ENCODE measurements at regions of chr18 and their contacts with region 1.

Region 1: GRCh38 chr18:35972197-35973052 is at the start of gene RMP24:
- DNase-seq: peak; percentile 90
- H3K4me3 Mint-ChIP-seq: peak within 1 kb of the TSS; percentile 96
- H3K27ac Mint-ChIP-seq: peak within 1 kb of the TSS; percentile 94
- H3K4me1 Mint-ChIP-seq: peaks cover 39% of the 10 kb centered on the region
- H3K27me3 Mint-ChIP-seq: no peaks in the 10 kb centered on the region

Region 2: GRCh38 chr18:34787931-34788532 is 1184.4 kb before region 1 on chr18:
- intact Hi-C with region 1: no loop called
- DNase-seq: no peak
- H3K4me3 Mint-ChIP-seq: no peak overlapping the region
- H3K27ac Mint-ChIP-seq: no peak overlapping the region
- H3K4me1 Mint-ChIP-seq: peaks cover 3% of the 10 kb centered on the region
- H3K27me3 Mint-ChIP-seq: peaks cover 9% of the 10 kb centered on the region

Region 3: GRCh38 chr18:35240664-35241447 is 731.6 kb before region 1 on chr18 and contains the start of gene ZNF397:
- intact Hi-C with region 1: loop called (anchors 1 kb)
- DNase-seq: peak; percentile 94
- H3K4me3 Mint-ChIP-seq: peak within 1 kb of the TSS; percentile 94
- H3K27ac Mint-ChIP-seq: peak within 1 kb of the TSS; percentile 98
- H3K4me1 Mint-ChIP-seq: peaks cover 11% of the 10 kb centered on the region
- H3K27me3 Mint-ChIP-seq: no peaks in the 10 kb centered on the region
- total RNA-seq, gene ZNF397: 14.6 and 18.4 TPM in 2 replicates

Region 4: DNA sequence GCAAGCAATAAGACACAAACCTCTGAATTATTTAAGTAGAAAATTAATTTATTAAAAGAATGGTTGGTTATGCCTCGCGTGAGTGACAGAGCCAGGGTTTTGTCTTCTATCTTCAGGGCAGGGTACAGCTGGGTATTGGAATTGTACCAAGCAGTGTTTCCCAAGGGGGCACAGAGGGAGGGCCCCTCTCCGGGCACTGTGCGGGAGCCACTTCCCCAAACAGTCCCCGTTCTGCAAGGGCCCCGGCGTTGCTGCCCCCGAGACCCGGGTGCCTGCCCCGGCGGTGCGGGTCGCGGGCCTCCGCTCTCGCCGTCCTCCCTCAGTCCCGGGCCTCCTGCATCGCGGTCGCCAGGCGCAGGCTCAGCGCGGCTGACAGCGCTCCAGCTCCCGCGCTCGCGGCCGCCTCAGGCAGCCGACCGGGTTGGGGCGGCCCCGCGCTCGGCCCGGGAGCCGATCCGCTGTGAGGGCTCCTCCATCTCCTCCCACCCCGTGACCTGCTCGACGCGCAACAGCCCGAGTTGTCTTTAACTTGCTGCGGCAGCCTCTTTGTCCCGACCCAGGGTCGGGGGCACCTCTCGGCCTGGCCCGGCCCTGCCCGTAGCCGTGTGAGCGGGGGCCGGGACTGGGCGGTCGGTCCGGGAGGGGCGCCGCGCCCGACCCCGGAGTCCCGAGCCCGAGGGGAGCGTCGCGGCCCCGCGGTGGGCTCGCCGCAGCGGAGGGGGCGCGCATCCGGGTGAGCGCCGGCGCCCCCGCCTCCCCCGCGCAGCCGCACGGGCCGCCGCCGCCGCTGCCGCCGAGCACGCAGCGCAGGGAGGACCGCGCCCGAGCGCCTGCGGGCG is 391.5 kb before region 1 on chr18:
- intact Hi-C with region 1: loop called (anchors 5 kb)
- DNase-seq: peak; percentile 43
- H3K4me3 Mint-ChIP-seq: peak overlapping the region; percentile 68
- H3K27ac Mint-ChIP-seq: peak overlapping the region; percentile 51
- H3K4me1 Mint-ChIP-seq: peaks cover 27% of the 10 kb centered on the region
- H3K27me3 Mint-ChIP-seq: peaks cover 22% of the 10 kb centered on the region

Region 5: DNA sequence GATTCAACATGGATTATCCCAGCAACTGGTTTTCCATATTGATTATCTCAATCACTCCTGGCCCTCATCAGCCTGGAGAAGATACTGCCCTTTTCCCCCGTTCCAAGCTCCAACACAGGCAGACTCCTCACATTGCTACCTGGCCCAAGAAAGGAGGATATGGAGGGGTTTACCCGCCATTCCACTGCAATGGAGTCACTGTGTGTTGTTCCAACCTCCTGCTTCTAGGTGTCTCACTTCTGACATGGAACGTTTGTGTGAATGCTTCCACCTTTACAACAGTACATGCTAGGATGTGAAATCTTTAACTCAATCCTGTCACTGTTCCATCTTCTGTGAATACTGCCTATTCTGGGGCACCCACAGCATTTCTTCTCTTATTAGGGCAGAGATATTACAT is 36.8 kb after region 1 on chr18:
- intact Hi-C with region 1: no loop called
- DNase-seq: no peak
- H3K4me3 Mint-ChIP-seq: no peak overlapping the region
- H3K27ac Mint-ChIP-seq: no peak overlapping the region
- H3K4me1 Mint-ChIP-seq: no peaks in the 10 kb centered on the region
- H3K27me3 Mint-ChIP-seq: no peaks in the 10 kb centered on the region

Region 6: DNA sequence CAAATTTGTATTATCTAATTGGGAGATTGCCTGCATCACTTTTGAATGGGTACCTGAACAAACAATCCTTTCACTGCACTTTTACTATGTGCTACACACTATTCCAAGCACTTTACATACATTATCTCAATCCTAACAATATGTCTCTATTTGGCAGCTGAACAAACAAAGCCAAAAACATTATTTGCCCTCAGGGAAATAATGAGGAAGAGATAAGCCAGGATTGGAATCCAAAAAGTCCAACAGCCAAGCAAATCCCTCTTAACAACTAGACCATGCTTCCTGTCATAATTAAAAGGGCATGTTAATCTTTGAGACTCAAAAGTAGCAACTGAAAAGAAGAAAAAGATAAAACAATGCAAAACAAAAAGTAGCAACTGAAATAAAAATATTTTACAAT is 62.8 kb after region 1 on chr18:
- intact Hi-C with region 1: no loop called
- DNase-seq: no peak
- H3K4me3 Mint-ChIP-seq: no peak overlapping the region
- H3K27ac Mint-ChIP-seq: no peak overlapping the region
- H3K4me1 Mint-ChIP-seq: peaks cover 13% of the 10 kb centered on the region
- H3K27me3 Mint-ChIP-seq: no peaks in the 10 kb centered on the region

Region 7: GRCh38 chr18:36067055-36067957 is 94.9 kb after region 1 on chr18 and contains the start of gene RPRD1A:
- intact Hi-C with region 1: loop called (anchors 1 kb)
- DNase-seq: peak; percentile 95
- H3K4me3 Mint-ChIP-seq: peak within 1 kb of the TSS; percentile 89
- H3K27ac Mint-ChIP-seq: peak within 1 kb of the TSS; percentile 92
- H3K4me1 Mint-ChIP-seq: peaks cover 22% of the 10 kb centered on the region
- H3K27me3 Mint-ChIP-seq: peaks cover 7% of the 10 kb centered on the region
- total RNA-seq, gene RPRD1A: 23.4 and 24.1 TPM in 2 replicates

Region 8: GRCh38 chr18:36828630-36829361 is 856.4 kb after region 1 on chr18 and contains the starts of genes KIAA1328 and TPGS2:
- intact Hi-C with region 1: loop called (anchors 2 kb)
- DNase-seq: peak; percentile 86
- H3K4me3 Mint-ChIP-seq: peak within 1 kb of the TSS; percentile 88
- H3K27ac Mint-ChIP-seq: peak within 1 kb of the TSS; percentile 95
- H3K4me1 Mint-ChIP-seq: peaks cover 48% of the 10 kb centered on the region
- H3K27me3 Mint-ChIP-seq: no peaks in the 10 kb centered on the region
- total RNA-seq, gene KIAA1328: 7.4 and 7.9 TPM in 2 replicates
- total RNA-seq, gene TPGS2: 81.6 and 83.3 TPM in 2 replicates

Measured in activated T-helper 2 cell treated with anti-CD3 and anti-CD28 coated beads, Interferon-gamma antibody, Interleukin-2, Interleukin-4, amounts not matched to agents 10 μg/mL and 5 μg/mL and 100 μg/mL, durations not matched to agents 14 hours and 24 hours and 36 hours (primary cell).